ENCODE measurements at regions of chr19 and their contacts with region 1.

Region 1: GRCh38 chr19:5827891-5828660 is 11.4 kb downstream of the FUT6 start:
- DNase-seq: peak; percentile 97
- ATAC-seq: peak; percentile 83
- H3K4me3 Mint-ChIP-seq: peak overlapping the region; percentile 94
- H3K27ac Mint-ChIP-seq: peak overlapping the region; percentile 97
- H3K4me1 Mint-ChIP-seq: peaks cover 11% of the 10 kb centered on the region
- H3K27me3 Mint-ChIP-seq: no peaks in the 10 kb centered on the region

Region 2: GRCh38 chr19:5904352-5905113 is 76.5 kb after region 1 on chr19 and contains the start of gene VMAC:
- CTCF ChIA-PET with region 1: interaction called, 12 read pairs
- DNase-seq: peak; percentile 100
- ATAC-seq: peak; percentile 87
- H3K4me3 Mint-ChIP-seq: peak within 1 kb of the TSS; percentile 99
- H3K27ac Mint-ChIP-seq: peak within 1 kb of the TSS; percentile 99
- H3K4me1 Mint-ChIP-seq: peaks cover 33% of the 10 kb centered on the region
- H3K27me3 Mint-ChIP-seq: no peaks in the 10 kb centered on the region
- total RNA-seq, gene VMAC: 5.1 to 7.0 TPM